Naive thymus-derived CD4-positive, alpha-beta T cell (primary cell): ENCODE measurements at regions of chr11 and their contacts with region 1.

Region 1: DNA sequence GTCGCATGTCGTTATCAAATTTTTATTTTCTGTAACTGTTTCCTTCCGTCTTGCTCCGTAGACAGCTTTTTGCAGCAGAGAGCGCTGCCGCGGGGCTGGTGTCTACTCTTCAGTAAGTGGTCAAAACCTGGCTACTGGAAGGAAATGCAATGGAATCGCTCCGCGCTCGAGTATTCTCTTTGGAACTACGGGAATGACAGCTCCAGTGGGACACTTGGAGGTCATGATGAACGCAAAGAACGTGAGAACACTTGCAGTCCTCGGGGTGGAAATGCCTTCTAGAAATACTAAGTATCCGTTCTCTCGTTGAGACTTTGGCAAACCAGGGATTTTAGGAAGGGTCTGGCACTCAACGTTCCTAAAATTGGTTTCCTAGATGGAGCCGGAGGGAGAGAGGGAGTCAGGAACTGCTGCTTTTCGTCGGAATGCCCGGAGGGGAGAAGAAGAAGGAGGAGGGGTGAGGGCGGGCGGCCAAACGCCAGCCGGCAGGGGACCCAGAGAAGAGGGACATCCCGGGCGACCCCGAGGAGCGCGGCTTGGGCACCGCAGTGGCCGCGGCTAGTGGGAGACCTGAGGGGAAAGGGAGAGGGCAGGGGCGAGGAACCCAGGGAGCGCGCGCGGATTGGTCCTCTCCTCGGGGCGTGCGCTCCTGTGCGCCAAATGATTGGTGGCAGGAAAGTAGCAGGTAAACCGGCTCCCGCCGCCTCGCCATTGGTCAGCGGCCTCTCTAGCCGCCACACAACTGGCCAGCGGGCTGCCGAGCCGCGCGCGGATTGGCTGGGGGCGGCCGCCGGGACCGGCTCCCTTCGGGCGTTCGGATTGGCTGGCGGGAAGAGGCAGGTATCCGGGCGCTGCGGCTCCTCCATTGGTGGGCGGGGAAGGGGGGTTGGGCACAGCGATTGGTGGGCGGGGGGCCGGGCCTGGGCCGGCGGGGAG is 490 bp upstream of the BMAL1 start:
- DNase-seq: peak; percentile 93 to 97 (median 96)
- ATAC-seq: peak; percentile 91
- H3K4me3 ChIP-seq: peak overlapping the region; percentile 80
- H3K4me3 Mint-ChIP-seq: peak overlapping the region; percentile 95 to 99 (median 97)
- H3K27ac ChIP-seq: peak overlapping the region; percentile 81
- H3K27ac Mint-ChIP-seq: peak overlapping the region; percentile 72 to 97 (median 91)
- H3K4me1 ChIP-seq: peaks cover 19 to 29% of the 10 kb centered on the region in 2 donors
- H3K4me1 Mint-ChIP-seq: peaks cover 32 to 47% (median 40%) of the 10 kb centered on the region in 7 donors
- H3K27me3 ChIP-seq: no peaks in the 10 kb centered on the region
- H3K27me3 Mint-ChIP-seq: peaks cover 0 to 51% (median 0%) of the 10 kb centered on the region in 5 donors

Region 2: GRCh38 chr11:12361682-12362081 is 915.4 kb before region 1 on chr11:
- CTCF ChIA-PET with region 1: no interaction called
- POLR2A ChIA-PET with region 1: no interaction called
- intact Hi-C with region 1: loop called in 1 of 2 experiments (anchors 5 kb)
- DNase-seq: no peak
- ATAC-seq: no peak
- H3K4me3 ChIP-seq: no peak overlapping the region
- H3K4me3 Mint-ChIP-seq: peak overlapping the region in 1 of 10 donors; percentile 19
- H3K27ac ChIP-seq: no peak overlapping the region
- H3K27ac Mint-ChIP-seq: peak overlapping the region in 8 of 9 donors; percentile 20 to 97 (median 70)
- H3K4me1 ChIP-seq: peaks cover 46 to 56% of the 10 kb centered on the region in 2 donors
- H3K4me1 Mint-ChIP-seq: peaks cover 20 to 83% (median 79%) of the 10 kb centered on the region in 7 donors
- H3K27me3 ChIP-seq: no peaks in the 10 kb centered on the region
- H3K27me3 Mint-ChIP-seq: peaks cover 0 to 4% (median 0%) of the 10 kb centered on the region in 5 donors

Region 3: DNA sequence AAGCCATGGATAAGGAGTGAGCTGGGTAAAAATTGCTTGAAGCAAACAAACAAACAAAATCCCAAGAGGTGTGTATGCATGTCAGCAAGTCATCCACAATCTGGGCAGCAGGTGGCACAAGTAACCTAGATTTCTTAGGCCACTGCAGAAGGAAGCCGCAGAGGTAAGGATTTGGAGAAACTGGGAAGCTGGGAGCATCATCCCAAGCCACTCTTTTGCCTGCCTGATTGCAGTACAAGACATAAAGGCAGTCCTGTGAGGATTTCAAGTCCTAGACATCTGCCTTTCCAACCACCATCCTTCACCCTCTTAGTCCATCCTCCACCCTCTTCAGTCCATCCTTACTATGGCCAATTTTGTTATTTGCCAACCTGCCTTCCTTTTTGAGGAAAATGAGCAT is 66.7 kb before region 1 on chr11:
- CTCF ChIA-PET with region 1: interaction called, 3 read pairs
- POLR2A ChIA-PET with region 1: interaction called, 3 read pairs
- intact Hi-C with region 1: loop called (anchors 1 to 2 kb)
- DNase-seq: peak in 3 of 9 donors; percentile 7 to 9 (median 8)
- ATAC-seq: no peak
- H3K4me3 ChIP-seq: no peak overlapping the region
- H3K4me3 Mint-ChIP-seq: no peak overlapping the region
- H3K27ac ChIP-seq: no peak overlapping the region
- H3K27ac Mint-ChIP-seq: peak overlapping the region in 1 of 9 donors; percentile 32
- H3K4me1 ChIP-seq: peaks cover 0 to 6% of the 10 kb centered on the region in 2 donors
- H3K4me1 Mint-ChIP-seq: peaks cover 16 to 33% (median 23%) of the 10 kb centered on the region in 7 donors
- H3K27me3 ChIP-seq: no peaks in the 10 kb centered on the region
- H3K27me3 Mint-ChIP-seq: peaks cover 0 to 3% (median 0%) of the 10 kb centered on the region in 5 donors

Region 4: DNA sequence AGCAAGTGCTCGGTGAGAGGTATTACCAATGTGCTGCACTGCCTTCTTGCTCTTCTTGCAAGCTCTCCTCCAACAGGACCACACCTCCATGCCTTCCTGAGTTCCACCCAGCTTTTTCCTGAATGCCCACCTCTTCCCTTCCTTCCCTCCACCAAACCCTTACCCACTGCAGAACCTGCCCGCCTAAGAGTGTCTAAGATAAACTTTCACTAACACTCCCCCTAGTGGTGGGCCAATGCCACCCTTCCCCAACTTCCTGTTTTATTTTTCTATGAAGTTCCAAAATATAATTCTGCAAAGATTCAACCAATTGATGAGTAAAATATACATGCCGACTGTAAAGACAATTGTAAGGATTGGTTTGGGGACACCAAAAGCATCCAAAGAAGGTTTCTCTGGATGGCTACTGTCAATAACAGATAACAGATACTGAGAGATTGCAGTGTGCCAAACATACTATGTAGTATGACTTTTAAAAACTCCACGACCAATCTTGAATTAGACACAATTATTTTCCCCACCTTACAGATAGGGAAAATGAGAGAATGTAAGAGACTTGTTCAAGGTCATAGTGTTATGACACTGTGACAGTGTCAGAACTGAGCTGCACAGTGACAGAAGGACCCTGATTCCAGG is 38.1 kb before region 1 on chr11:
- CTCF ChIA-PET with region 1: interaction called, 3 read pairs
- POLR2A ChIA-PET with region 1: interaction called, 3 read pairs
- intact Hi-C with region 1: loop called in 1 of 2 experiments (anchors 1 kb)
- DNase-seq: peak; percentile 11 to 59 (median 43)
- ATAC-seq: peak; percentile 84
- H3K4me3 ChIP-seq: no peak overlapping the region
- H3K4me3 Mint-ChIP-seq: no peak overlapping the region
- H3K27ac ChIP-seq: no peak overlapping the region
- H3K27ac Mint-ChIP-seq: no peak overlapping the region
- H3K4me1 ChIP-seq: no peaks in the 10 kb centered on the region
- H3K4me1 Mint-ChIP-seq: peaks cover 0 to 5% (median 0%) of the 10 kb centered on the region in 7 donors
- H3K27me3 ChIP-seq: no peaks in the 10 kb centered on the region
- H3K27me3 Mint-ChIP-seq: peaks cover 0 to 45% (median 15%) of the 10 kb centered on the region in 5 donors

Region 5: DNA sequence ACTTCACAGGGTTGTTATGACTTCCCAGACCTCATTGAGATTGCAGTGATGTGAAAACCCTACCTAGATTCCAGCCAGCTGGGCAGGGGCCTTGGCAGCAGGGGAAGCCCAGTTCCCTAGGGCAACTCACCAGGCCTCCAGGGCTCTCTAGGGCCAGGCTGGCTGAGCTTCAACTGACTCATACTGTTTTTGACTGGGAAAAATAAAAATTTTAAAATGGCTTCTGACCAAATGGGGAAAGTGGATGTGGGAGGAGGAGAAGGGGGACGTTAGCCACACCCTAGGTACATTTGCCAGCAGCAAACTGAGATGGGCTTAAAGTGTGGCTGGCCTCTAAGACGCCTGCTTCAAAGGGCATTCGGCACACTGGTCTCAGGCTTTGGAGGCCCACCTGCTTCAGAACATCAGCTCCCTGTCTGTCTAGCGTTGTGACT is 39.4 kb after region 1 on chr11:
- CTCF ChIA-PET with region 1: interaction called, 8 read pairs
- POLR2A ChIA-PET with region 1: interaction called, 3 read pairs
- intact Hi-C with region 1: loop called in 1 of 2 experiments (anchors 5 kb)
- DNase-seq: no peak
- ATAC-seq: no peak
- H3K4me3 ChIP-seq: no peak overlapping the region
- H3K4me3 Mint-ChIP-seq: peak overlapping the region in 3 of 10 donors; percentile 1 to 18 (median 4)
- H3K27ac ChIP-seq: no peak overlapping the region
- H3K27ac Mint-ChIP-seq: peak overlapping the region in 3 of 9 donors; percentile 14 to 51 (median 28)
- H3K4me1 ChIP-seq: peaks cover 20 to 21% of the 10 kb centered on the region in 2 donors
- H3K4me1 Mint-ChIP-seq: peaks cover 36 to 93% (median 87%) of the 10 kb centered on the region in 7 donors
- H3K27me3 ChIP-seq: no peaks in the 10 kb centered on the region
- H3K27me3 Mint-ChIP-seq: no peaks in the 10 kb centered on the region

Region 6: GRCh38 chr11:13391217-13391616 is 114.1 kb after region 1 on chr11:
- CTCF ChIA-PET with region 1: no interaction called
- POLR2A ChIA-PET with region 1: no interaction called
- intact Hi-C with region 1: no loop called
- DNase-seq: no peak
- ATAC-seq: no peak
- H3K4me3 ChIP-seq: no peak overlapping the region
- H3K4me3 Mint-ChIP-seq: no peak overlapping the region
- H3K27ac ChIP-seq: no peak overlapping the region
- H3K27ac Mint-ChIP-seq: peak overlapping the region in 6 of 9 donors; percentile 11 to 60 (median 41)
- H3K4me1 ChIP-seq: no peaks in the 10 kb centered on the region
- H3K4me1 Mint-ChIP-seq: peaks cover 0 to 2% (median 0%) of the 10 kb centered on the region in 7 donors
- H3K27me3 ChIP-seq: no peaks in the 10 kb centered on the region
- H3K27me3 Mint-ChIP-seq: no peaks in the 10 kb centered on the region